ENCODE measurements at regions of chr7 and their contacts with region 1.

Region 1: DNA sequence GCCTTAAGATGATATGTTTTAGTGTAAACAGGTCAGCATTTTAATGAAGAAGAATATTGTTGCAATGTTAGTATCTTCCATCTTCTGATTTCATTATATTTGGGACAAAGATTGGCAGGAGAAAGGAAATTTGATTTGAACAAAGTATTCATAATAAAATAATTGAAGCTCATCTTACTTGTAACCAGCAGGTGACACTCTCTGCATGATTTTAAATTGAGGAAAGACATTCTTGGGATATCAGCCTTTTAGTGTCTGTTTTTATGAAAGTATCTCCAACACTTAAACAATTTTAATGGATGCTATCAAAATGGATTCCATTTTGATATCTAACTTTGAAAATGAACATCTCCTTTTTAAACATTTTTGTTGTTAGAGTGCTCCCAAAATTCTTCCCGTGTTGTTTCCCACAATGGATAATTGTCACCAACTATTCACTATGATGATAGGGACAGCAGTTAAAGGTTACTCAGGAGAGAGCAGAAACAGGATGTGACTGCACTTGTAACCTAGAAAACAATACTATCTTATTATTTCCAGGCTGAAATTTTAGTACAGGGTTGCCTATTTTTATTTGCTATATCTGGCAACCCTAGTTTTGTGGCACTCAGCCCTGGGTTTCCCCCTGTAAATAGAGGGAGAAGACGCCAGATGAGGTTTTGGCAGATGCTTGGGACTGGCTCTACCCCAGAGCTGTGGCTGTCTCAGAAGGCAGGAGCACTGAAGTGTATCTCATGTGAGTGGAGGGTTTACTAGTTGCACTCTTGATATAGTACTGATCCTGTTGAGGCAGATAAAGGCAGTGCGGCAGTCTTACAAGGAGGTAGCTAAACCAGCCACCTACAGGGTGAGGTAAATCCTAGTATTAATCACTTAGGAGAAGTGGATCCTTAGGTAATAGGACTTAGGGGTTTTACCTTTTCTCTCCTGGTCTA is 31.0 kb upstream of the ABCB4 start:
- DNase-seq: no peak
- H3K4me3 Mint-ChIP-seq: no peak overlapping the region
- H3K27ac Mint-ChIP-seq: no peak overlapping the region
- H3K4me1 Mint-ChIP-seq: no peaks in the 10 kb centered on the region
- H3K27me3 Mint-ChIP-seq: no peaks in the 10 kb centered on the region

Region 2: GRCh38 chr7:87886875-87887274 is 380.4 kb after region 1 on chr7:
- CTCF ChIA-PET with region 1: interaction called, 4 read pairs
- POLR2A ChIA-PET with region 1: no interaction called
- intact Hi-C with region 1: loop called (anchors 1 kb)
- DNase-seq: no peak
- H3K4me3 Mint-ChIP-seq: no peak overlapping the region
- H3K27ac Mint-ChIP-seq: no peak overlapping the region
- H3K4me1 Mint-ChIP-seq: peaks cover 4% of the 10 kb centered on the region
- H3K27me3 Mint-ChIP-seq: no peaks in the 10 kb centered on the region